Adrenal gland (tissue), 19 donors: ENCODE measurements at regions of chr3 and their contacts with region 1.

Region 1: GRCh38 chr3:196694202-196694638 is 17.8 kb downstream of the CEP19 start:
- DNase-seq: no peak
- H3K4me3 ChIP-seq: no peak overlapping the region
- H3K27ac ChIP-seq: no peak overlapping the region
- H3K4me1 ChIP-seq: no peaks in the 10 kb centered on the region
- H3K27me3 ChIP-seq: peaks cover 3% of the 10 kb centered on the region
- CTCF ChIP-seq: no peak
- POLR2A ChIP-seq: no peak

Region 2: GRCh38 chr3:196537319-196537984 is 156.8 kb before region 1 on chr3:
- intact Hi-C with region 1: loop called (anchors 10 kb)
- DNase-seq: peak in 5 of 7 donors; percentile 38 to 64 (median 51)
- H3K4me3 ChIP-seq: no peak overlapping the region
- H3K27ac ChIP-seq: no peak overlapping the region
- H3K4me1 ChIP-seq: no peaks in the 10 kb centered on the region
- H3K27me3 ChIP-seq: no peaks in the 10 kb centered on the region
- CTCF ChIP-seq: peak; percentile 48 to 73 (median 62)
- POLR2A ChIP-seq: no peak

Region 3: DNA sequence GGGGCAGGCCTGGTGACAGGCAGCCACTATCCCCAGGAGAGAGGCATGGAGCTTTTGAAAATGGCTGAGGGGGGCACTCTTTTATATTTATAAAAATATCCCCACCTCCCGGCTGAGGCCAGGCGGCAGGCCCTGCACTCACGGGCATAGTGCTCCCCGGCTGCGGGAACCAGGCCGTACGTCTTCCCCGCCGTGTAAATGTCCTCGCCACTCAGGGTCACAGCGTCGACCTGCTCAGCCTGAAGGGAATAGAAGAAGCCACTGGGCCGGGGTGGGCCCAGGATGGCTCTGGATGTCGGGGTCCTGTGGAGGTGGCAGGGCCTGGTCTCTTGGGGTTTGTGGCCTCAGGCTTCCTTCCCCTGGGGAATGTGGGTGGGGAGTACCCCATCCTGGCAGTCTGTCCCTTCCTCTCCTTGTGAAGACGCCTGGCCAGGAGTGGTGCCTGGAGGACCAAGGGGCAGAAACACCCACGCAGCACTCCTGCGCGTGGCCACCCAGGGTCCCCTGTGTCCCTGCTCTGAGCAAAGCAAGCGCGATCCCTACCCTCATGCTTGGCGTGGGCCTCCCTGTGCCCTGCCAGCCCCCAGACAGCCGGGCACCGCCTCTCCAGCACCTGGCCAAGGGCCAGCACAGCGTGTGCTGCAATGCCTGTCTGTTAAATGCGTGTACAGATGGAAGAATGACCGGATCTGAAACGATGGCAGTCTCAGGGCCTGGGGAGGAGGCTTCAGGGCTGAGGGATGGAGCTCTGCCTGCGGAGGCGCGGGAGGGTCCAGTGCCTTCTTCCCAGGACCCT is 316.5 kb after region 1 on chr3:
- intact Hi-C with region 1: no loop called
- DNase-seq: no peak
- H3K4me3 ChIP-seq: no peak overlapping the region
- H3K27ac ChIP-seq: no peak overlapping the region
- H3K4me1 ChIP-seq: no peaks in the 10 kb centered on the region
- H3K27me3 ChIP-seq: peaks cover 7% of the 10 kb centered on the region
- CTCF ChIP-seq: no peak
- POLR2A ChIP-seq: no peak